ENCODE measurements at regions of chr7 and their contacts with region 1.

Region 1: DNA sequence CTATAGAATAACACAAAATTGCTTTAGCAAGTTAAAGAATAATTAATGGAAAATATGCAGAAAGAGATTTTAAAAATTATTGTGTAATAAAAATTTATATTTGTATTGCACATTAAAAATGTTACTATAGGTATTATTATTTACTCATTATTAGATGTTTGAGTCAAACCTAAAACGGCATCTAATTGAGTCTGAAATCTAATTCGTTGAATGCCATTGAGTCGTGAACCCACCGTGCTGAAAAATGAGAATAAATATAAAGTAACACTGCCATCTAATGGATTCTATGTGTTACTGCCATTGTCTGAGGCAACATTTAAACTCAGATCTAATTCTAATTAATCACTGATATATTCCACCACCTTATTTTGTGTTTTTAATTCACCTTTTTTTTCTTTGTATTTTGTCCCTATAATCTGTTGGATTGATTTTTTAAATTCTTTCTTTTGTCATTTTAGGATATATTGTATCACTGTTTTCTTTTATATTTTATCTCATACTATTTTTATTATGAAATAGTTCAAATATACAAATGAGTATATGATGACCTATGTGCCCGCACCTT is 62.2 kb downstream of the SAMD9 start:
- DNase-seq: no peak
- ATAC-seq: peak; percentile 77
- H3K4me3 ChIP-seq: no peak overlapping the region
- H3K27ac ChIP-seq: no peak overlapping the region
- H3K4me1 ChIP-seq: no peaks in the 10 kb centered on the region
- H3K27me3 ChIP-seq: no peaks in the 10 kb centered on the region
- CTCF ChIP-seq: peak; percentile 51 to 71 (median 66)
- POLR2A ChIP-seq: no peak
- RAD21 ChIP-seq: peak; percentile 88

Region 2: GRCh38 chr7:91465595-91466061 is 1590.0 kb before region 1 on chr7:
- CTCF ChIA-PET with region 1: no interaction called
- POLR2A ChIA-PET with region 1: no interaction called
- RAD21 ChIA-PET with region 1: no interaction called
- intact Hi-C with region 1: no loop called
- DNase-seq: no peak
- ATAC-seq: no peak
- H3K4me3 ChIP-seq: no peak overlapping the region
- H3K27ac ChIP-seq: no peak overlapping the region
- H3K4me1 ChIP-seq: no peaks in the 10 kb centered on the region
- H3K27me3 ChIP-seq: 0 out of 2 replicates have a peak, but pooled peaks cover 4% of the 10 kb centered on the region
- CTCF ChIP-seq: no peak
- POLR2A ChIP-seq: no peak
- RAD21 ChIP-seq: no peak

Region 3: GRCh38 chr7:92461027-92462003 is 594.3 kb before region 1 on chr7:
- CTCF ChIA-PET with region 1: no interaction called
- POLR2A ChIA-PET with region 1: no interaction called
- RAD21 ChIA-PET with region 1: interaction called in 1 of 2 experiments, 3 read pairs
- intact Hi-C with region 1: loop called (anchors 1 kb)
- DNase-seq: peak; percentile 41
- ATAC-seq: peak; percentile 94
- H3K4me3 ChIP-seq: no peak overlapping the region
- H3K27ac ChIP-seq: no peak overlapping the region
- H3K4me1 ChIP-seq: no peaks in the 10 kb centered on the region
- H3K27me3 ChIP-seq: no peaks in the 10 kb centered on the region
- CTCF ChIP-seq: peak; percentile 71 to 84 (median 78); a peak in 5 of 6 replicates
- POLR2A ChIP-seq: no peak
- RAD21 ChIP-seq: peak; percentile 69

Region 4: DNA sequence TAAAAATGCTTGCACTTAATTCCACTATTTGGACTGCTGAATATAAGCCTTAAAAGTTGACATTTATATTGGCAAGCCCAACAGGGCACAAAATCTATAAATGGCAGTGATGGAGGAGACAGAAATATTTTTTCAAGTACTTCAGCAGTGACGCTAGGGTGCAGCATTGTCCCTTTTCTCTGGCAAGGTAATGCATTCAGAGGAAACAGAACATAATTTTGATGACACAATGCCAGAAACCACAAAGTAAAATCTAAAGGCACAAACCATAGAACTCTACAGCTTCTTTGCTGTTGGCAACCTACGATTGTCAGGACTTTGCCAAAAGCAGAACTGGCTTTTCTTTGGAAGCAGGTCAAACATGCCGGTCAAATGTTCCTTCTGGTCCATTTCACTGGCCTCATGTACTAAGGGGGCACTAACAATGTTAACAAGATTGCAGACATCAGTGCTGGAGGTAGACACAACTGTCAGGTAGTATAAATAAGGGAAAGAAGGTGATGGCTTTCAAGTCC is 434.5 kb before region 1 on chr7:
- CTCF ChIA-PET with region 1: no interaction called
- POLR2A ChIA-PET with region 1: no interaction called
- RAD21 ChIA-PET with region 1: interaction called in 1 of 2 experiments, 5 read pairs
- intact Hi-C with region 1: loop called (anchors 1 kb)
- DNase-seq: peak; percentile 53
- ATAC-seq: peak; percentile 81
- H3K4me3 ChIP-seq: no peak overlapping the region
- H3K27ac ChIP-seq: peak overlapping the region; percentile 1; the same call in 1 of the 2 replicates
- H3K4me1 ChIP-seq: peaks cover 3 to 28% of the 10 kb centered on the region in 2 experiments; a peak in 3 of 4 replicates
- H3K27me3 ChIP-seq: no peaks in the 10 kb centered on the region
- CTCF ChIP-seq: peak; percentile 58 to 83 (median 73)
- POLR2A ChIP-seq: no peak
- RAD21 ChIP-seq: peak; percentile 95

Region 5: GRCh38 chr7:92691578-92691977 is 364.0 kb before region 1 on chr7:
- CTCF ChIA-PET with region 1: no interaction called
- POLR2A ChIA-PET with region 1: no interaction called
- RAD21 ChIA-PET with region 1: no interaction called
- intact Hi-C with region 1: loop called (anchors 1 kb)
- DNase-seq: peak; percentile 52
- ATAC-seq: peak; percentile 39; the same call in 1 of the 2 replicates
- H3K4me3 ChIP-seq: no peak overlapping the region
- H3K27ac ChIP-seq: no peak overlapping the region
- H3K4me1 ChIP-seq: peaks cover 25 to 48% of the 10 kb centered on the region in 2 experiments
- H3K27me3 ChIP-seq: no peaks in the 10 kb centered on the region
- CTCF ChIP-seq: peak; percentile 58 to 76 (median 75)
- POLR2A ChIP-seq: no peak
- RAD21 ChIP-seq: peak; percentile 80

Region 6: GRCh38 chr7:93043385-93043985 is 12.1 kb before region 1 on chr7:
- CTCF ChIA-PET with region 1: no interaction called
- POLR2A ChIA-PET with region 1: no interaction called
- RAD21 ChIA-PET with region 1: no interaction called
- intact Hi-C with region 1: no loop called
- DNase-seq: peak; percentile 32
- ATAC-seq: peak; percentile 93
- H3K4me3 ChIP-seq: peak overlapping the region; percentile 37 to 45
- H3K27ac ChIP-seq: no peak overlapping the region
- H3K4me1 ChIP-seq: peaks cover 0 to 12% of the 10 kb centered on the region in 2 experiments; a peak in 2 of 4 replicates
- H3K27me3 ChIP-seq: no peaks in the 10 kb centered on the region
- CTCF ChIP-seq: no peak
- POLR2A ChIP-seq: no peak
- RAD21 ChIP-seq: no peak

Region 7: GRCh38 chr7:93117852-93118530 is 62.4 kb after region 1 on chr7 and contains the start of gene SAMD9:
- CTCF ChIA-PET with region 1: no interaction called
- POLR2A ChIA-PET with region 1: no interaction called
- RAD21 ChIA-PET with region 1: no interaction called
- intact Hi-C with region 1: loop called (anchors 10 kb)
- DNase-seq: peak; percentile 49
- ATAC-seq: peak; percentile 87
- H3K4me3 ChIP-seq: peak within 1 kb of the TSS; percentile 44 to 54
- H3K27ac ChIP-seq: 0 out of 2 replicates have a peak within 1 kb of the TSS, but pooled peaks have one; percentile 8
- H3K4me1 ChIP-seq: peaks cover 8 to 51% of the 10 kb centered on the region in 2 experiments; a peak in 3 of 4 replicates
- H3K27me3 ChIP-seq: no peaks in the 10 kb centered on the region
- CTCF ChIP-seq: no peak
- POLR2A ChIP-seq: no peak
- RAD21 ChIP-seq: no peak
- total RNA-seq, gene SAMD9: 5.3 TPM